ENCODE measurements at regions of chr5 and their contacts with region 1.

Region 1: GRCh38 chr5:176573564-176574296 is 24.6 kb downstream of the CDHR2 start:
- DNase-seq: peak; percentile 88
- CTCF ChIP-seq: peak; percentile 81

Region 2: GRCh38 chr5:175378444-175379028 is 1195.2 kb before region 1 on chr5:
- CTCF ChIA-PET with region 1: no interaction called
- POLR2A ChIA-PET with region 1: no interaction called
- DNase-seq: no peak
- CTCF ChIP-seq: no peak

Region 3: GRCh38 chr5:176543428-176544173 is 30.1 kb before region 1 on chr5:
- CTCF ChIA-PET with region 1: interaction called, 15 read pairs
- POLR2A ChIA-PET with region 1: no interaction called
- DNase-seq: peak; percentile 73
- CTCF ChIP-seq: peak; percentile 6

Region 4: DNA sequence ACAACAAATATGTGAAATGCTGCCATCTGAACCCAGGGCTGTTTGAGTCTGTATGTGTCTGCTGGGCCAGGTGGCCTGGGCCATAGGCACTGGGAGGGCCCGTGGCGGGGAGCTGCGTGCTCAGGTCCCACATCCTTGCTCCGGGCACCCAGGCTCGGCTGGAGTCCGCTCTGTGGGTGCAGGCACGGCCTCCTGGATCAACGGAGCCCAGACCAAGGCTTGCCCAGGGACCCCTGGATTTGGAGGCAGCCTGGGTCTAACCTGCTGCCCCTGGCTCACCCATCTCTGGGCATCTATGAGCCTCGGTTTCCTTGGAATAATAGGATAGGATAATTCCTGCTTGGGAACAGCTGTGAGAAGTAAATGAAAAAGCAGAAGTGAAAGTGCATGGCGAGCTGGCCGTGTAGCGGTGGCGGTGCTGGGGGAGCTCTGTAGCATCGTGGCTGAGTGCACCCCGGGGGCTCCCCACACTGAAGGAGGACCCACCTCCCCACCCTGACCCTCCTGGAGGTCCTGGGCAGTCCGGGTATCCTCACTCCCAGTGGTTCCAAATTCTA is 23.4 kb before region 1 on chr5:
- CTCF ChIA-PET with region 1: interaction called, 15 read pairs
- POLR2A ChIA-PET with region 1: no interaction called
- DNase-seq: no peak
- CTCF ChIP-seq: no peak

Region 5: DNA sequence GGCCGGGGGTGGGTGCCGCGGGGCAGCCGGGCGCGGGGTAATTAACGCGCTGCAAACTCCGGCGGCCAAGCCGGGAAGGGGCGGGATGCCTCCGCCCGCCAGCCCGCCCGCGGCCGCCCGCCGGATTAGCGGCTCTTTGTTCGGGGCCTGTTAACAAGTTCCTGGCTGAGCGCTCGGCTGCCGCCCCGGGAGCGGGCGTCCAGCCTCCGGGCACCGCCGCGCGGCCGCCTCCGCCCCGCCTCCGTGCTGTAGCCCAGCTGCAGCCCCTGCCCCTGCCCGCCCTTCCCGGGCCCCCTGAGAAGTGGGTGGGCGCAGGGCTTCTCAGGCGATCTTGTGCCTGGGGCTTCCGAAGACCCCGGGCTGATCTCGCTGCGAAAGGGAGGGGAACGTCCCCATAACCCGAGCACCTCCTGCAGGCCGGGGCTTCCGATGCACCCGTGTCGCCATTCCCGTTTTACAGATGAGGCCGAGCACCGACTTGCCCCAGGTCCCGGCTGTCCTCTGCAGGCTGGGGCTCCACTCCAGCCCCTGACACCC is 244.2 kb after region 1 on chr5:
- CTCF ChIA-PET with region 1: no interaction called
- POLR2A ChIA-PET with region 1: no interaction called
- DNase-seq: no peak
- CTCF ChIP-seq: peak; percentile 25

Measured in GM10248 (cell line).